ENCODE measurements at regions of chr11 and their contacts with region 1.

Region 1: DNA sequence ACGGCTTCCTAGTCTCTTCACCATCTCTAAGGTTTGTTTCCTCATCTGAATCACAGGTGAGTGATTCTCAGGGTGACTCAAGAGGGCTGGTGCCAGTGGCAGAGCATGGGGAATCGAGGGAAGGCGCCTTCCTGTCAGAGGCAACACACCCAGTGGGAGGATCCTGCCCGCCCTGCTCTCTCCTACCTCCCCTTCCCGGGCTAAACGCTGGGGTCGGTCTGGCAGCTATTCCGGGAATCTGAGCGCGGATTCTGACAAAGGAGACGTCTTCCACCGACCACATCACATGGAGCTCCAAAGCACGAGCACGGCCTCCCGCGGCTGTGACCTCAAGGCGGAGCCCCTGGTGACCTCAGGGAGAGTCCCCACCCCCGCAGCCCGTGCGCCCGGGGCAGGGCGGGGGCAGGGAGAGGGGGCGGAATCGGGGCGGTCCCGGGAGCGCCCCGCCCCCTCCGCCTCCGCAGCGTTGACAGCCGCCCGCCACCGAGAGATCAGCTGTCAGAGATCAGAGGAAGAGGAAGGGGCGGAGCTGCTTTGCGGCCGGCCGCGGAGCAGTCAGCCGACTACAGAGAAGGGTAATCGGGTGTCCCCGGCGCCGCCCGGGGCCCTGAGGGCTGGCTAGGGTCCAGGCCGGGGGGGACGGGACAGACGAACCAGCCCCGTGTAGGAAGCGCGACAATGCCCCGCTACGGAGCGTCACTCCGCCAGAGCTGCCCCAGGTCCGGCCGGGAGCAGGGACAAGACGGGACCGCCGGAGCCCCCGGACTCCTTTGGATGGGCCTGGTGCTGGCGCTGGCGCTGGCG is at the start of gene SMPD1:
- DNase-seq: peak; percentile 97
- ATAC-seq: peak; percentile 90
- H3K4me3 Mint-ChIP-seq: peak within 1 kb of the TSS; percentile 77
- H3K27ac Mint-ChIP-seq: peak within 1 kb of the TSS; percentile 93
- H3K4me1 Mint-ChIP-seq: peaks cover 55% of the 10 kb centered on the region
- H3K27me3 Mint-ChIP-seq: no peaks in the 10 kb centered on the region
- total RNA-seq, gene SMPD1: 13.1 to 14.1 TPM

Region 2: GRCh38 chr11:5684646-5685362 is 705.3 kb before region 1 on chr11 and contains the start of gene TRIM5:
- CTCF ChIA-PET with region 1: no interaction called
- POLR2A ChIA-PET with region 1: no interaction called
- intact Hi-C with region 1: loop called in 1 of 2 experiments (anchors 10 kb)
- DNase-seq: peak; percentile 90
- ATAC-seq: peak; percentile 84
- H3K4me3 Mint-ChIP-seq: peak within 1 kb of the TSS; percentile 84
- H3K27ac Mint-ChIP-seq: peak within 1 kb of the TSS; percentile 93
- H3K4me1 Mint-ChIP-seq: peaks cover 43% of the 10 kb centered on the region
- H3K27me3 Mint-ChIP-seq: no peaks in the 10 kb centered on the region
- total RNA-seq, gene TRIM5: 16.4 to 17.9 TPM

Region 3: GRCh38 chr11:5783255-5783654 is 606.9 kb before region 1 on chr11 and contains the start of gene OR52N5:
- CTCF ChIA-PET with region 1: no interaction called
- POLR2A ChIA-PET with region 1: no interaction called
- intact Hi-C with region 1: no loop called
- DNase-seq: no peak
- ATAC-seq: no peak
- H3K4me3 Mint-ChIP-seq: no peak within 1 kb of the TSS
- H3K27ac Mint-ChIP-seq: no peak within 1 kb of the TSS
- H3K4me1 Mint-ChIP-seq: no peaks in the 10 kb centered on the region
- H3K27me3 Mint-ChIP-seq: peaks cover 3% of the 10 kb centered on the region
- total RNA-seq, gene OR52N5: not detected

Region 4: GRCh38 chr11:6362873-6363678 is 27.0 kb before region 1 on chr11:
- CTCF ChIA-PET with region 1: no interaction called
- POLR2A ChIA-PET with region 1: no interaction called
- intact Hi-C with region 1: no loop called
- DNase-seq: peak; percentile 86
- ATAC-seq: peak; percentile 97
- H3K4me3 Mint-ChIP-seq: no peak overlapping the region
- H3K27ac Mint-ChIP-seq: no peak overlapping the region
- H3K4me1 Mint-ChIP-seq: no peaks in the 10 kb centered on the region
- H3K27me3 Mint-ChIP-seq: no peaks in the 10 kb centered on the region

Region 5: GRCh38 chr11:6402561-6402981 is 12.4 kb after region 1 on chr11:
- CTCF ChIA-PET with region 1: interaction called, 6 read pairs
- POLR2A ChIA-PET with region 1: interaction called, 20 read pairs
- intact Hi-C with region 1: loop called (anchors 1 kb)
- DNase-seq: peak; percentile 85
- ATAC-seq: peak; percentile 88
- H3K4me3 Mint-ChIP-seq: peak overlapping the region; percentile 65
- H3K27ac Mint-ChIP-seq: peak overlapping the region; percentile 95
- H3K4me1 Mint-ChIP-seq: peaks cover 78% of the 10 kb centered on the region
- H3K27me3 Mint-ChIP-seq: no peaks in the 10 kb centered on the region

Region 6: DNA sequence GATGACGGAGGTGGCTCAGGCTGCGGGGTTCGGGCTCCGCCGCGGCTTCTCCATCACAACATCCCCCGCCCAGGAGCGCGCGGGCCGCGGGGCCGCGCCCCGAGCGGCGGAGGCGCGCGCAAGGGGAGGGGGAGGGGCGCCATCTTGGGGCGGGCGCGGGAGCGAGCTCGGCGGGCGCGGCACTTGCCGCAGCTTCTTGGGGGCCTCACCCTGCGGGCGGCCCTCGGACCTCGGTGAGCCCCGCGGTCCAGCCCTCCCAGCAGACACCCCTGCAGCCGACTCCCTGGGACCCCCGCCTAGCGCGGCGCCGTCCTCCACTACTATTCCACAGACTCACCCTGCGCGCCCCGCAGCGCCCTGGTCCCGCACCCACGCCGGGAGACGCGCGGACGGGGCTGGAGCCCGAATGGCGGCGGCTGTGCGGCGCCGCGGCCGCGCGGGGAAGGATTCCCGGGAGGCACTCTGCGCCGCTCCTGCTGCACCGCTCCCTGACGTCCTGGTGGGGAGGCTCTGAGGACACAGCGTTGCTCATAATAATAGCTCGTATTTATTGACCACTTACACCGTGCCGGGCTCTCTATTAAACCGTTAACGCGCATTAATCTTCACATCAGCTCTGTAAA is 29.0 kb after region 1 on chr11 and contains the start of gene APBB1:
- CTCF ChIA-PET with region 1: interaction called, 5 read pairs
- POLR2A ChIA-PET with region 1: interaction called, 12 read pairs
- intact Hi-C with region 1: loop called (anchors 1 kb)
- DNase-seq: peak; percentile 86
- ATAC-seq: peak; percentile 54
- H3K4me3 Mint-ChIP-seq: peak within 1 kb of the TSS; percentile 72
- H3K27ac Mint-ChIP-seq: peak within 1 kb of the TSS; percentile 73
- H3K4me1 Mint-ChIP-seq: peaks cover 7% of the 10 kb centered on the region
- H3K27me3 Mint-ChIP-seq: peaks cover 6% of the 10 kb centered on the region
- total RNA-seq, gene APBB1: 43.2 to 49.8 TPM

Region 7: DNA sequence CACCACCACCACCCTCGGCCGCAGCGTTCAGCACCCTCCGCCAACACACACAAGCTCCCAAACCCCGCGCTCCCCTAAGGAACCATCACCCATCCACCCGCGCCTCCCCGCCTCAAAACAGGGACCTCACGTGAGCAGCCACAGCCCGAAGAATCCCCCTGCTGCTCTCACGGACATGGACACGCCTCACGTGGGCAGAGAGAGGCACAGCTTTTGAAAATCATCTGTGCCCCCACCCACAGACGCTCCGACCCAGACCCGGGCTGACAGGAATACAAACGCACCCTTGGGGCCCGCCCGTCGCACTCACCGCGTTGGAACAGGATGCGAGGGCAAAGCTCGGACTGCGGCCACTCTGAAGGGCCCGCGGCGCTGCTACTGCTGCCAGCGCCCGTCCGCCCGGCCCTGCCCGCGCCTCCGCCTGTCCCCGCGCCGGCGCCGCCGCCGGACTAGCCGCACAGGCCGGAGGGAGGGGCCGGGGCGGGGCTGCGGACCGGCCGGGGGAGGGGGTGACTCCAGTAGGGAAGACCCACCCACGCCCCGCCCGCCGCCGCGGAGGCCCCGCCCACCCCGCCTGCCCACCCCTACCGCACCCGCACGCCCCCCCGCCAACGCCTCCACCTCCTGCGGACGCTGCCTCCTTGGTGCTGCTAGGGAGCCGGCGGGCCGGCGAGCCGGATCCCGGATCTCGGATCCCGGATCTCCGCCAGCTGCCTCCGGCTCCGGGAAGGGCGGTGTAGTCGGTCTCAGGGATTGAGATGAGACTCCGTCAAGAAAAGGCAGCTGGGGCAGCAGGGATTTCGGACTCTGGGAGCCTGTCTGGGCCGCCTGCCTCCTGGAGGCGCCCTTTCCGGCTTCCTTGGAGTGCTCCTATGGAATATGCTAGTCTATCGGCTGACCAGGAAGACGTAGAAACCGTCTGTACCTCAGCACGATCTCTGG is 83.6 kb after region 1 on chr11 and contains the start of gene TRIM3:
- CTCF ChIA-PET with region 1: interaction called, 3 read pairs
- POLR2A ChIA-PET with region 1: no interaction called
- intact Hi-C with region 1: loop called in 1 of 2 experiments (anchors 2 kb)
- DNase-seq: peak; percentile 74
- ATAC-seq: peak; percentile 59
- H3K4me3 Mint-ChIP-seq: peak within 1 kb of the TSS; percentile 75
- H3K27ac Mint-ChIP-seq: peak within 1 kb of the TSS; percentile 66
- H3K4me1 Mint-ChIP-seq: peaks cover 12% of the 10 kb centered on the region
- H3K27me3 Mint-ChIP-seq: peaks cover 3% of the 10 kb centered on the region
- total RNA-seq, gene TRIM3: 3.8 to 4.2 TPM

Region 8: DNA sequence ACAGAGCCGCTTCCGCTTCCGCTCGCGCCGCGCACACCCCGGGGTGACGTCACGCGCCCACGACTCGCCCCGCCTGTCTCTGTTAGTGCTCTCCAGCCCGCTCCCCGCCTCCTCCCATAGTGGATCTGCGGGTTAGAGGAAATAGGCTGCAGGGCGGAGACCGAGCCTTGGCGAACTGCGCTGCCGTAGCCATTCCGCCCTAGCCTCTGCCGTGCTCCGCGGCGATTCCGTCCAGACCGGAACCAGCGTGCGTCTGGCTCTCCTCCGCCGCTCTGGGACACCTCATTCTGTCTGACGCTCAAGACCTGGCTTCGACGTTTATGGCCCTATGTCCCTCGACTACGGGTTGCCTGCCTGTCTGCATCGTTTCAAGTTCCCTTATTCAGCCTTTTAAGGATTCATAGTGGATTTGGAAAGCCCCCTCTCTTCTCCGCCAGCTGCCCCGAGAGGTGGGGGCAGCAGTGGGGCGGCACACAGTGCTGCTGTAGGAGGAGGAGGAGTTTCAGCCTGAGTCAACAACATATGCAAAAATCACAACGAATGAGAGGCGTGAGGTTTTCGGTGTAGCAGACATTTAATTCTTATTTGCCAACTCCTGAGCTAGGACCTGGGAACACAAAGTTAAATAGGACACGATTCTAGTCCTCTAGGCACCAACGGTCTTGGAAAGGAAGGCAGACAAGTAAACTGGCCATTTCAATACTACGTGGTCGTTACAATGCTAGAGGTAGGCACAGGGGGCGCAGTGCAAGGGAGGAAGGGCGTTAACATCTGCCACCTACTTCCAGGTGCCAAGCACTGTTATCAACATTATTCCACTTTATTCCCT is 222.3 kb after region 1 on chr11 and contains the start of gene TAF10:
- CTCF ChIA-PET with region 1: no interaction called
- POLR2A ChIA-PET with region 1: no interaction called
- intact Hi-C with region 1: loop called in 1 of 2 experiments (anchors 1 kb)
- DNase-seq: peak; percentile 97
- ATAC-seq: peak; percentile 85
- H3K4me3 Mint-ChIP-seq: no peak within 1 kb of the TSS
- H3K27ac Mint-ChIP-seq: peak within 1 kb of the TSS; percentile 93
- H3K4me1 Mint-ChIP-seq: peaks cover 44% of the 10 kb centered on the region
- H3K27me3 Mint-ChIP-seq: no peaks in the 10 kb centered on the region
- total RNA-seq, gene TAF10: 133 to 152 TPM

Region 9: DNA sequence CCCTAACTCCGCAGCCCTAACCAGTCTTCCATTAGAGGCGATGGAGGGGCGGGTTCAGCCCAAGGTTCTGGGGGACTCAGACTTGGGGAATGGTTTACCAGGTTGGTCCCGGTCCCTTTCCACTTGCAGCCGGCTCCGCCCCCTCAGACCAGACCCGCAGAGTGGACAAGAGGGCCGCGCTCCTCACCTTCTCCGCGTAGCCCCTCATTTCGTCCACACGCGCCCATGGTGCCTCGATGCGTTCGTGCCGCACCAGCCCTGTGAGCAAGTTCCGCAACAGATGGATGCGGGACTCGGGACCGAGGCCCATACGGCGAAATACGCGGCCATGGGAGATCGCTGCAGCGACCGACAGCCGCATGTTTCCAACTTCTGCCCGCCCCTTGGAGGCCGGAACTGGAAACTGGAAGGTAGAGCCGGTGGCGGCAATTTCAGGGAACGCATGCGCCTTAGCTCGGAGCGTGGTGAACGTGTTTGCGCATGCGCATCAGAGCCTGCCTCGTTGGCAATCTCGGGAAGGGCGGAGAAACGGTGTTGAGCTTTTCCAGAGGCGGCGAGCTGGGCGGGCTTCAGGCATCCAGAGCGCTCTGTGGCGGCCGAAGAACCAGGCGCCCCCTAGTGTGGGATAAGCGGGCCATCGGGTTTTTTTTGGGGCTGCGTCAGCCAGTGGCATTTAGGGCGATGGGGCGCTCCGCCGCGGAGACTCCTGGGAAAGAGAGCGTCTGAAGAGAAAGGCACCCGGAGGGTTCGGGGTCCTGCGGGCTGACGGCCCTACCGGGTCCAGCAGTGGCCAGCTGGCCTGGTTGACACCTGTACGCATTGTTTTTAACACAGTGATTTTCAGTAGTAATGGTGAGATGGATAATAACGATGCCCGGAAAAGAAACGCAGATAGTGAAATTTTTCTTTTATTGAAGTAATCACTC is 293.1 kb after region 1 on chr11 and contains the start of gene MRPL17:
- CTCF ChIA-PET with region 1: no interaction called
- POLR2A ChIA-PET with region 1: no interaction called
- intact Hi-C with region 1: loop called (anchors 2 kb)
- DNase-seq: peak; percentile 99
- ATAC-seq: peak; percentile 96
- H3K4me3 Mint-ChIP-seq: peak within 1 kb of the TSS; percentile 97
- H3K27ac Mint-ChIP-seq: peak within 1 kb of the TSS; percentile 100
- H3K4me1 Mint-ChIP-seq: peaks cover 29% of the 10 kb centered on the region
- H3K27me3 Mint-ChIP-seq: no peaks in the 10 kb centered on the region
- total RNA-seq, gene MRPL17: 118 to 156 TPM

Measured in activated CD4-positive, alpha-beta T cell treated with anti-CD3 and anti-CD28 coated beads for 36 hours (primary cell).